ENCODE measurements at regions of chr11 and their contacts with region 1.

Region 1: DNA sequence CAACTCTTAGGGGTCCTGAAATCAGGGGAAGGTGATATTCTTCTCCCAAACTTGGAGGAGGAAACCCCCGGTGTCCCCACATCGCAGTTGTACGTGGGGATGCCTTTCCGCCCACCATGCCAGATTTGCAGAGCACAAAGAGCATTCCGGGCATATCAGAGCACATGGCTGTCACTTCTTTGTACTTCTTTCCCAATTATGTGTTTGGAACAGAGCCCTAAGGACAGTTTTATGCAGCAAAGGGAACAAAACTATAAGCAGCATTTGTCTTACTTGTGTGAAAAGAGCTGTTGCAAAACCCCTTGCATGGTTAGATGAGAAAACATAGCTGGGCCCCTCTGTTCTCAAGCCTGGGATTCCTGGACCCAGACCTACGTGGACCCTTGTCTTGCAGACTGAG is 41.2 kb downstream of the NTM start:
- DNase-seq: no peak
- H3K4me3 ChIP-seq: no peak overlapping the region
- H3K27ac ChIP-seq: no peak overlapping the region
- H3K4me1 ChIP-seq: no peaks in the 10 kb centered on the region
- H3K27me3 ChIP-seq: no peaks in the 10 kb centered on the region
- CTCF ChIP-seq: no peak
- POLR2A ChIP-seq: no peak

Region 2: GRCh38 chr11:131356206-131356605 is 55.4 kb before region 1 on chr11:
- intact Hi-C with region 1: loop called (anchors 5 kb)
- DNase-seq: no peak
- H3K4me3 ChIP-seq: no peak overlapping the region
- H3K27ac ChIP-seq: no peak overlapping the region
- H3K4me1 ChIP-seq: no peaks in the 10 kb centered on the region
- H3K27me3 ChIP-seq: no peaks in the 10 kb centered on the region
- CTCF ChIP-seq: no peak
- POLR2A ChIP-seq: no peak

Region 3: DNA sequence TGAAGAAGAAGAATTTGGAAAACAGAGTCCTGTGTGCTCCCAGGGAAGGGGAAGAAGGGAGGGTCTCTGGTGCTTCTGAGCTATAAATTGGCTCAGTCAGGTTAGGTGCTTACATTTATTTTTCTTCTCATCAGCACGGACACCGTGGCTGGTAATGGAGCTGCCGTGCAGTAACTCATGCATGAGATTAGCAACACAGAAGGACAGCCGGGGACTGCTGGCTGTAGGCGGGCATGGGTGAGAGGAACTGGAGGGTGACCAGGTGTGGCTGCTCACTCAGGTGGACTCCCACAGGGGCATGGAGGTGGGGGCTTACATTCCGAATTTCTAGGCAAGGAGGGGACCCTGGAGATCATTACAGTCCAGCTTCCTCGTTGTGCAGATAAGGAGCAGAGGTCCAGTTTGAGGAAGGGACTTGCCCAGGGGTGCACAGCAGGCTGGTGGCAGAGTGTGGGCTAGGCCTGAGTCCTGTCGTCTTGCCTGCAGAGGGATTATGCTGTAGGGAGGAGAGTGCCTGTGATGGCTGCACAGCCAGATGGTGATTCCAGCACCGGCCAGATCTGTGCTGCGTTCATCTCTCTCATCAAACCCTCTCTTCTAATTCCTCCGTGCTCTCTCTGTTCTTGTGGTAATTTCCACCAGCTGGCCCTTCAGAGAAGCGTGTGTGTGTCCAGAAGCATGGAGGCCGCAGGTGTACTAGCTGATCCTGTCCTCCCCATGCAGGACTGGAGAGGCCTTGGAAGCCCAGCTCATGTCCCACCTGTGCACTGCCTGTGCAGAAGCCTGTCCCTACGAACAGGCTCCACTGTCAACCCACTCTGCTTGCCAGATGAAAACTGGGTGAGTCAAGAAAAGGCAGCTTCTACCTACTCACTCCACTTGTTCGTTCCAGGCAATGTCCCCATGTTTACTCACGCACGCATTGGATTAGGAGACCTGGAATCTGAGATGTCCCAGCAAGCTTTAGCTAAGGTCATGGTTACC is 37.7 kb after region 1 on chr11:
- intact Hi-C with region 1: no loop called
- DNase-seq: no peak
- H3K4me3 ChIP-seq: no peak overlapping the region
- H3K27ac ChIP-seq: no peak overlapping the region
- H3K4me1 ChIP-seq: no peaks in the 10 kb centered on the region
- H3K27me3 ChIP-seq: peaks cover 0 to 6% of the 10 kb centered on the region in 2 donors
- CTCF ChIP-seq: no peak
- POLR2A ChIP-seq: no peak